K562 (cell line): ENCODE measurements at regions of chr1 and their contacts with region 1.

Region 1: GRCh38 chr1:226236826-226237225 is 13.4 kb downstream of the MIXL1 start:
- DNase-seq: no peak
- ATAC-seq: no peak
- H3K4me3 ChIP-seq: no peak overlapping the region
- H3K27ac ChIP-seq: no peak overlapping the region
- H3K4me1 ChIP-seq: no peaks in the 10 kb centered on the region
- H3K27me3 ChIP-seq: no peaks in the 10 kb centered on the region
- CTCF ChIP-seq: no peak
- EP300 ChIP-seq: no peak
- POLR2A ChIP-seq: no peak
- RAD21 ChIP-seq: no peak

Region 2: DNA sequence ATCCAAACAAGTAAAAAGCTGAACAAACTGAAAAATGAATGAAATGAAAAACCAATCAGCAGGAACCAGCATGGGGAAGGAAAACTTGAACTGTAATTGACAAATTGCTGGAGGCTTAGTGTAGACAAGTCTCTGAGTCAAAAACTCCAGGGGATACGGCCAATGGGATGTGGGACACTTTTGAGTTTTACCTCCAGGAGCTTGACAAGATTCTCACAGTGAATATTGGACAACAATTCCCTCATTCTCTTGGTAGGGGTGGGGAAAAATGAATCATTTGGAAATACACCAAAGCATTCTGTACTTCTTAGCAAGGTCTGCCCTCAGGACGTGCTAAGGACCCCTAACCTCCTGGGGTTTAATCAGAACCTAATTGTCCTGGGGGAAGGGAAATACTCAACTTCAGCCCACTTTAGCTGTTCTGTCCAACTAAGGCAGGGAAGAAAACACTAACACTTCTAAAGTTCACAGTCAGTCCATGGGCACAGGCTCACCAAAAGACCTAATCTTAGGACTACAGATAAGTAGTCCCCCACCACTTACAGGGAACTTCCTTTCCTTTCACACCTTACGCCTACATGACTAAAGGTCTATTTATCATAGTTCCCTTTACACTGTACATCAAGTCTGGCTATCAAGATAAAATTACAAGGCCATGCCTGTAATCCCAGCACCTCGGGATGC is 1142.2 kb after region 1 on chr1:
- CTCF ChIA-PET with region 1: no interaction called
- POLR2A ChIA-PET with region 1: no interaction called
- in situ Hi-C with region 1: no loop called
- intact Hi-C with region 1: loop called (anchors 5 kb)
- DNase-seq: peak in 2 of 4 experiments; percentile 73 to 76
- ATAC-seq: peak; percentile 87
- H3K4me3 ChIP-seq: no peak overlapping the region
- H3K27ac ChIP-seq: peak overlapping the region; percentile 46
- H3K4me1 ChIP-seq: peaks cover 3 to 12% of the 10 kb centered on the region in 2 experiments; a peak in 4 of 5 replicates
- H3K27me3 ChIP-seq: no peaks in the 10 kb centered on the region
- CTCF ChIP-seq: no peak
- EP300 ChIP-seq: peak; percentile 59; the same call in 1 of the 2 replicates
- POLR2A ChIP-seq: no peak
- RAD21 ChIP-seq: no peak